Activated naive CD4-positive, alpha-beta T cell treated with anti-CD3 and anti-CD28 coated beads, Interleukin-2, amount 10 ng/mL, durations not matched to agents 7 days and 5 days (primary cell): ENCODE measurements at regions of chr17 and their contacts with region 1.

Region 1: GRCh38 chr17:75601057-75602051 is 13.8 kb downstream of the MYO15B start:
- DNase-seq: peak; percentile 78
- H3K4me3 Mint-ChIP-seq: no peak overlapping the region
- H3K27ac Mint-ChIP-seq: no peak overlapping the region
- H3K4me1 Mint-ChIP-seq: no peaks in the 10 kb centered on the region
- H3K27me3 Mint-ChIP-seq: peaks cover 6% of the 10 kb centered on the region

Region 2: DNA sequence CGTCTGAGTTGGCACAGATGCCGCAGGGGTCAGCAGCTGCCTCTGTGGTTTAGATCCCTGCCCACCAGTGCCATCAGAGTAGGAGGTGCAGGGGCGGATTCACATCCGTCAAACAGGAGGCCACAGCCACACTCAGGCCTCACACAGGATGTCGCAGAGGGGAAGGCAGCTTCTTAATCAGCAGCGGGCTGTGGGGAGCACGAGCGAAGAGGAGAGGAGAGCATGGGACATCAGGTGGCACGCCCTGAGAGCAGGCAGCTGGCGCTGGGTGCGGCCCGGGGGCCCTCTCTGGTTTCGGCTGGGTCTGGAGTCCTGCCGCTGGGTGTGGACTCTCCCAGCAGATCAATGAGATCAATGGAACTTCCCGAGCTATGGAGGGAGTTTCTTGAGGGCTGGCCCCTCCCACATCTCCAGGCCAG is 66.2 kb before region 1 on chr17:
- CTCF ChIA-PET with region 1: no interaction called
- DNase-seq: peak; percentile 79
- H3K4me3 Mint-ChIP-seq: peak overlapping the region; percentile 31
- H3K27ac Mint-ChIP-seq: peak overlapping the region; percentile 82
- H3K4me1 Mint-ChIP-seq: peaks cover 32% of the 10 kb centered on the region
- H3K27me3 Mint-ChIP-seq: no peaks in the 10 kb centered on the region

Region 3: GRCh38 chr17:75589012-75589918 is 12.1 kb before region 1 on chr17:
- CTCF ChIA-PET with region 1: interaction called, 13 read pairs
- DNase-seq: peak; percentile 98
- H3K4me3 Mint-ChIP-seq: peak overlapping the region; percentile 67
- H3K27ac Mint-ChIP-seq: no peak overlapping the region
- H3K4me1 Mint-ChIP-seq: peaks cover 18% of the 10 kb centered on the region
- H3K27me3 Mint-ChIP-seq: peaks cover 57% of the 10 kb centered on the region

Region 4: DNA sequence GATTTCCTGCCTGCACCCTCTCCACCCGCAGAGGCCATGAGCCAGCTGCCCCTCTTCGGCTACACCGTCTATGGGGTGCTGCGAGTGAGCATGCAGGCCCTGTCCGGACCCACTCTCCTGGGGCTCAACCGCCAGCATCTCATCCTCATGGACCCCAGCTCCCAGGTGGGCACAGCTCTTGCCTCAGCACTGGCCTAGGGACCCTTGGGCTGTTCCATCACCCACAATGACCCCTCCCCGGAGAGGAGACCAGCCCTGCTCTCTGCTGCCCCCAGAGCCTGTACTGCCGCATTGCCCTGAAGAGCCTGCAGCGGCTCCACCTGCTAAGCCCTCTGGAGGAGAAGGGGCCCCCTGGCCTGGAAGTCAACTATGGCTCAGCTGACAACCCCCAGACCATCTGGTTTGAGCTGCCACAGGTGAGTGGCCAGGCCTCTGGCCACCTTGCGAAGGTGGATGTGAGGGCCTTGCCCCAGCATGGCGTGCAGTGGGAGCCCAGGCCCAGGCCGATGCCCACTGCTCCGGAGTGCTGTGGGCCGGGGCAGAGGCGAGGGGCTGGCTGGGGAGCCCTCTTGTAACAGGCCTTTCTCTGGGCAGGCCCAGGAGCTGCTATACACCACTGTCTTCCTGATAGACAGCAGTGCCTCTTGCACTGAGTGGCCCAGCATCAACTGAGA is 24.6 kb after region 1 on chr17:
- CTCF ChIA-PET with region 1: interaction called, 12 read pairs
- DNase-seq: peak; percentile 52
- H3K4me3 Mint-ChIP-seq: no peak overlapping the region
- H3K27ac Mint-ChIP-seq: no peak overlapping the region
- H3K4me1 Mint-ChIP-seq: no peaks in the 10 kb centered on the region
- H3K27me3 Mint-ChIP-seq: no peaks in the 10 kb centered on the region